Activated CD4-positive, alpha-beta memory T cell treated with anti-CD3 and anti-CD28 coated beads for 36 hours (primary cell): ENCODE measurements at regions of chr4 and their contacts with region 1.

Region 1: GRCh38 chr4:185183619-185184281 is 20.1 kb downstream of the CFAP97 start:
- DNase-seq: peak; percentile 78
- H3K4me3 Mint-ChIP-seq: no peak overlapping the region
- H3K27ac Mint-ChIP-seq: no peak overlapping the region
- H3K4me1 Mint-ChIP-seq: peaks cover 42% of the 10 kb centered on the region
- H3K27me3 Mint-ChIP-seq: no peaks in the 10 kb centered on the region

Region 2: GRCh38 chr4:185134307-185134869 is 49.4 kb before region 1 on chr4:
- CTCF ChIA-PET with region 1: interaction called, 20 read pairs
- POLR2A ChIA-PET with region 1: no interaction called
- intact Hi-C with region 1: no loop called
- DNase-seq: no peak
- H3K4me3 Mint-ChIP-seq: no peak overlapping the region
- H3K27ac Mint-ChIP-seq: no peak overlapping the region
- H3K4me1 Mint-ChIP-seq: no peaks in the 10 kb centered on the region
- H3K27me3 Mint-ChIP-seq: peaks cover 25% of the 10 kb centered on the region

Region 3: GRCh38 chr4:185142912-185143595 is 40.7 kb before region 1 on chr4 and contains the start of gene SLC25A4:
- CTCF ChIA-PET with region 1: interaction called, 12 read pairs
- POLR2A ChIA-PET with region 1: no interaction called
- intact Hi-C with region 1: loop called (anchors 5 kb)
- DNase-seq: peak; percentile 90
- H3K4me3 Mint-ChIP-seq: peak within 1 kb of the TSS; percentile 80
- H3K27ac Mint-ChIP-seq: no peak within 1 kb of the TSS
- H3K4me1 Mint-ChIP-seq: peaks cover 13% of the 10 kb centered on the region
- H3K27me3 Mint-ChIP-seq: peaks cover 25% of the 10 kb centered on the region
- total RNA-seq, gene SLC25A4: 7.7 to 8.4 TPM

Region 4: DNA sequence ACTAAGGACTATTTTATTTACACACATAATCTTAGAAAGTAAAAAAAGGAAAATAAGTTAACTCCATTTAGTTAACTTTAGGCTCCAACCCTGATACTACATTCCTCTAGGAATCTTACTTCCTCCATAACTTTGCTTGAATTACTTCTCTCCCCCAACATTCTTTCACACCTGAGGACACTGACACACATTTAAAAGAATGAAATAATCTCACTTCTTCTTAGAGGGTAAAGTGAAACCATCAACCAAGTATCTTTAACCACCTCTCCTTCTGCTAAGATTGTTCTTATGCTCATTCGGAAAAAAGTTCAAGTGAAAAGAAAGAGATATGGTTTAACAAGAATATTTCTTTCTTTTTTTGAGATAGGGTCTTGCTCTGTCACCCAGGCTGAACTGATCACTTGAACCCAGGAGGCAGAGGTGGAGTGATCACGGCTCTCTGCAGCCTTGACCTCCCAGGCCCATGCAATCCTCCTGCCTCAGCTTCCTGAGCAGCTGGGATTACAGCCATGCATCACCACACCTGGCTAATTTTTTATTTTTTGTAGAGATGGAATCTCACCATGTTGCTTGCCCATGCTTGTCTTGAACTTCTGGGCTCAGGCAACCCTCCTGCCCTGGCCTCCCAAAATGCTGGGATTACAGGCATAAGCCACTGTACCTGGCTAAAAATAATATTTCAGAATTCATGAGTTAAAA is 12.2 kb before region 1 on chr4:
- CTCF ChIA-PET with region 1: interaction called, 22 read pairs
- POLR2A ChIA-PET with region 1: no interaction called
- intact Hi-C with region 1: no loop called
- DNase-seq: no peak
- H3K4me3 Mint-ChIP-seq: no peak overlapping the region
- H3K27ac Mint-ChIP-seq: no peak overlapping the region
- H3K4me1 Mint-ChIP-seq: peaks cover 5% of the 10 kb centered on the region
- H3K27me3 Mint-ChIP-seq: no peaks in the 10 kb centered on the region

Region 5: DNA sequence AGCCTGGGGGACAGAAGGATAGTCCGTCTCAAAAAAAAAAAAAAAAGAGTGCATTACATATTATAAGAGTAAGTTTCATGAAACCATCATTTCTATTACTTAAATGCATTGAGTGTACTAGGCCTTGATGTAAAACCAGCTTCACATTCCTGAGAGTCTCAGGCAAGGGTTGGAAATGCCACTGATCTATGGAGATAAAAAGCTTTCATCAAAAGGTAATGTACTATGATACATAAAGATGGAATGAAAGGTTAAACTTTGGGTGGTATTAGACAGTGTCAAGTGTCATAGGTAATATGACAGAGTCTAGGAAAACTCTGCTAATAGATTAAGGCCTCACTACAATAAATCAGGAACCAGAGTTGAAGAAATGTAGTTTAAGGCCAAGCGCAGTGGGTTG is 12.7 kb after region 1 on chr4:
- CTCF ChIA-PET with region 1: interaction called, 14 read pairs
- POLR2A ChIA-PET with region 1: no interaction called
- intact Hi-C with region 1: no loop called
- DNase-seq: no peak
- H3K4me3 Mint-ChIP-seq: no peak overlapping the region
- H3K27ac Mint-ChIP-seq: no peak overlapping the region
- H3K4me1 Mint-ChIP-seq: peaks cover 33% of the 10 kb centered on the region
- H3K27me3 Mint-ChIP-seq: no peaks in the 10 kb centered on the region

Region 6: GRCh38 chr4:185209031-185209851 is 25.5 kb after region 1 on chr4 and contains the start of gene SNX25:
- CTCF ChIA-PET with region 1: interaction called, 10 read pairs
- POLR2A ChIA-PET with region 1: interaction called, 4 read pairs
- intact Hi-C with region 1: no loop called
- DNase-seq: peak; percentile 91
- H3K4me3 Mint-ChIP-seq: peak within 1 kb of the TSS; percentile 88
- H3K27ac Mint-ChIP-seq: peak within 1 kb of the TSS; percentile 72
- H3K4me1 Mint-ChIP-seq: peaks cover 46% of the 10 kb centered on the region
- H3K27me3 Mint-ChIP-seq: no peaks in the 10 kb centered on the region
- total RNA-seq, gene SNX25: 18.9 to 21.6 TPM